ENCODE measurements at regions of chr7 and their contacts with region 1.

Region 1: DNA sequence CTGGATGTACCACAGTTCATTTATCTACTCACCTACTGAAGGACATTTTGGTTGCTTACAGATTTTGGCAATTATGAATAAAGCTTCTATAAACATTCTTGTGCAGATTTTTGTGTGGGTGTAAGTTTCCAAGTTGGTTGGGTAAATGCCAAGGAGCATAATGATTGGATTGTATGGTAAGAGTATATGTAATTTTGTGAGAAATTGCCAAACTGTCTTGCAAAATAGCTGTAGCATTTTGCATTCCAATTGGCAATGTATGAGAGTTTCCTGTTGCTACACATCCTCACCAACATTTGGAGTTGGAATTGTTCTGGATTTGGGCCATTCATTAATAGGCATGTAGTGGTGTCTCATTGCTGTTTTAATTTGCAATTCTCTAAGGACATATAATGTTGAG is 33.9 kb upstream of the HYAL4 start:
- DNase-seq: no peak
- H3K4me3 ChIP-seq: no peak overlapping the region
- H3K27me3 ChIP-seq: no peaks in the 10 kb centered on the region
- CTCF ChIP-seq: no peak

Region 2: DNA sequence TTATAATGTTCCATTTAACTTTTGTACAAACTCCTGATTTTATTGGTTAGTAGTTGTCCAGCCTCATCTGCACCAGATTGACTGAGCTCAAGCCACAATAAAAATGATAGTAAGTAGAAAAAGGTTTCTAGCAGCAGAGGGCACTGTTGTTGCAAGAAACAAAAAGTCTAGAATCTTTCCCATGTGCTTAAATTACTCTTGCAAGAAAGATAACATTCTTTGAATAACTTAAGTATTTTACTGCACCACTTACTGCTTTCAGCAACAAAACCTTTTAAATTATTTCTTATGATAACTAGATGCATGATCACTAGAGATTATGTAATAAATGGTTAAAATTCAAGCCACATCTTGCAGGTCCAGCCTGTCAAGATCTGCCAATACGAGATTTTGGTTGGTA is 128.4 kb before region 1 on chr7:
- CTCF ChIA-PET with region 1: no interaction called
- POLR2A ChIA-PET with region 1: no interaction called
- DNase-seq: peak; percentile 28
- H3K4me3 ChIP-seq: no peak overlapping the region
- H3K27me3 ChIP-seq: no peaks in the 10 kb centered on the region
- CTCF ChIP-seq: peak; percentile 55

Region 3: GRCh38 chr7:123784263-123784662 is 26.8 kb before region 1 on chr7:
- CTCF ChIA-PET with region 1: no interaction called
- POLR2A ChIA-PET with region 1: no interaction called
- DNase-seq: no peak
- H3K4me3 ChIP-seq: no peak overlapping the region
- H3K27me3 ChIP-seq: no peaks in the 10 kb centered on the region
- CTCF ChIP-seq: no peak

Region 4: DNA sequence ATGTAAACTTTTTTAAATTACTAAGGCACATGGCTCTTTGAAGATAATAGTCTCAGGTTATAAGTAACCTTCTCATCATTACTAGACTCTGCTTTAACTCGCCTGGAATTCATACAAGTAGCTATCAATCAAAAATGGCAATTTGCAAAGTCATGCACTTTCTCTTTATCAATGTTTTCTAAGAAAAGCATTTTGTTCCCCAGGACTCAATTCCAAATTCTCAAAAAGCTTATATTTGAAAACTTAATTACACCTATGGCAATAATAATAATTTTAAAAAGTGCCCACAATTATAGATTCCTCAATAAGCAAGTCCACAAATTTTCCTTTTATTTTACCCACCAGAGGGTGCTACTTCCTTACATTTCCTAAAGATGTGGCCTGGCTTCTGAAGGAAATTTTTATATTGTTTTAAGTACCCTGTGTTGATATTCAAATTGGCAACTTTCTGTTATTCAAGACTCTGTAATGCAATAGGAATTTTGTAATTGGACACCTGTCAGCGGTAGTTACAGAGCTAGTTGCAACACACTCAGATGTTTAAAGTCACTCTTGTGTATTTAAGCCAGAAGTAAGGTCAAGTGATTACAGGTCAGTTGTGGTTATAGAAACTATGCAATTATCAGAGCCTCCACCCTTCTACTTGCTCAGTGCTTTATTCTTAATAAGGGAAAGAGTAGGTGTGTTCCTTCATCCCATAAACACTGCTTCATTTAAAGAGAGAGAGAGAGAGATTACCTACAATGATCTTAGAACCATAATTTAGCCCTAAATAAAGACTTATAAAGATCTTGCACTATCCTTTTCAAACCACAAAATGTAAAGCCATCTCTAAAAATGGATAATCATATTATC is 13.2 kb before region 1 on chr7:
- CTCF ChIA-PET with region 1: interaction called, 13 read pairs
- POLR2A ChIA-PET with region 1: no interaction called
- DNase-seq: peak; percentile 59
- H3K4me3 ChIP-seq: no peak overlapping the region
- H3K27me3 ChIP-seq: no peaks in the 10 kb centered on the region
- CTCF ChIP-seq: peak; percentile 49

Measured in BJ (cell line).